ENCODE measurements at regions of chr18 and their contacts with region 1.

Region 1: DNA sequence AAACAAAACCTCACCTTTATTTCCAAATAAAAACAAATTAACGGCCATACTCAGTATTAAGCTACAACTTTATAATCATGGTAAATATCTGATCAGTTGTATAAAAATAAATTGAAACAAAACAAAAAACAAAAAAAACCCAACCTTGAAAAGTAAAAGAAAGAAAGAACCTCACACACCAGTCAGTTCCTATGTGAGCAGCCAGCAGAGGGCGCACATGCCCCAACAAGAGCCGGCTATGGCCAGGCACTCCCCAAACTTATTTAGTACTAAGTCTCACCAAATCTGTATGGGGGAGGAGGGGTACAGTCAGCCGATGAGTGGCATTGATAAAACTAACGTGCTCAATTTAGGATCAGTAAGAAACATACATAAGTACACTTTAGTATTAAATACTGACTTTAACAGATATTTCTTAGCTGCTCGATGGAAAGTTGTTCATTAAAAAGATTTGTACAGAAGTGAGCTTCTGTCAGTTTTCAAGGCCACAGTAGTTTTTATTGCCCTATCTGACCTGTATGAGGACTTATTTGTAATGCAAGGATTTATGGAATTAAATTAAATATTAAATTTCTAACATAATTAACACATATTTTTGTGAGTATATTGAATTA is 172.6 kb downstream of the TCF4 start:
- DNase-seq: peak; percentile 86
- ATAC-seq: peak; percentile 92
- H3K4me3 ChIP-seq: no peak overlapping the region
- H3K27ac ChIP-seq: no peak overlapping the region
- H3K4me1 ChIP-seq: peaks cover 9% of the 10 kb centered on the region
- H3K27me3 ChIP-seq: no peaks in the 10 kb centered on the region
- CTCF ChIP-seq: peak; percentile 90
- POLR2A ChIP-seq: no peak
- RAD21 ChIP-seq: peak; percentile 94

Region 2: GRCh38 chr18:55477499-55477859 is 62.1 kb after region 1 on chr18:
- CTCF ChIA-PET with region 1: no interaction called
- POLR2A ChIA-PET with region 1: no interaction called
- dilution Hi-C with region 1: no loop called
- in situ Hi-C with region 1: no loop called
- intact Hi-C with region 1: no loop called
- DNase-seq: peak; percentile 52
- ATAC-seq: peak; percentile 72
- H3K4me3 ChIP-seq: peak overlapping the region; percentile 41
- H3K27ac ChIP-seq: peak overlapping the region; percentile 86
- H3K4me1 ChIP-seq: peaks cover 3% of the 10 kb centered on the region; the same call in 1 of the 2 replicates
- H3K27me3 ChIP-seq: no peaks in the 10 kb centered on the region
- CTCF ChIP-seq: no peak
- POLR2A ChIP-seq: no peak
- RAD21 ChIP-seq: no peak; the same call in 1 of the 2 replicates

Region 3: DNA sequence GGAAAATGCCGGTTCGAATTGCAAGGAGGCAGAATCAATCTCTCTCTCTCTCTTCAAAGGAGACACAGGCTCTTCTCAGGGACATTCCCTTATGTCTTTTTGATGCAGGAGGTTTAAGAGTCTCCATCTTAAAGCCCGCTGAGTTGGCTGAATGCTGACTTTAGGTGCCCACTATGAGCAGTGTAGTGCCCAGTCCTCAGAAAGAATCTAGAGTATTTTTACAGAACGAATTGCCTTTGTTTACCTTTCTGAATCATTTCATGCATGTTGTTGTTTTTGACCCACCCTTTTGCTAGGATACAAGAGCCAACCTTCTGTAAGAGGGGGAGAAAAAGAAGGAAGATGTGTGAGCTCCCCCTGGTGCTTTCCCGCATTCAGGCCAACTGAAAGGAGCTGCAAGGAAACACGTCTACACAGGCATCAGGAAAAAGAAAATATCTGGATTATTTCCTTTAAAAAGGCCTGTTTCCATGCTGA is 366.2 kb after region 1 on chr18:
- CTCF ChIA-PET with region 1: no interaction called
- POLR2A ChIA-PET with region 1: no interaction called
- dilution Hi-C with region 1: no loop called
- in situ Hi-C with region 1: loop called (anchors 10 kb)
- intact Hi-C with region 1: loop called (anchors 1 kb)
- DNase-seq: peak; percentile 77
- ATAC-seq: peak; percentile 63
- H3K4me3 ChIP-seq: no peak overlapping the region
- H3K27ac ChIP-seq: no peak overlapping the region
- H3K4me1 ChIP-seq: no peaks in the 10 kb centered on the region; the same call in 1 of the 2 replicates
- H3K27me3 ChIP-seq: no peaks in the 10 kb centered on the region
- CTCF ChIP-seq: peak; percentile 80
- POLR2A ChIP-seq: no peak
- RAD21 ChIP-seq: peak; percentile 87

Region 4: GRCh38 chr18:55861266-55861665 is 445.9 kb after region 1 on chr18:
- CTCF ChIA-PET with region 1: no interaction called
- POLR2A ChIA-PET with region 1: no interaction called
- dilution Hi-C with region 1: no loop called
- in situ Hi-C with region 1: no loop called
- intact Hi-C with region 1: loop called (anchors 2 kb)
- DNase-seq: peak; percentile 60
- ATAC-seq: peak; percentile 59; the same call in 1 of the 2 replicates
- H3K4me3 ChIP-seq: no peak overlapping the region
- H3K27ac ChIP-seq: no peak overlapping the region
- H3K4me1 ChIP-seq: no peaks in the 10 kb centered on the region
- H3K27me3 ChIP-seq: no peaks in the 10 kb centered on the region
- CTCF ChIP-seq: peak; percentile 54
- POLR2A ChIP-seq: no peak
- RAD21 ChIP-seq: peak; percentile 58

Region 5: GRCh38 chr18:56314396-56314795 is 899.0 kb after region 1 on chr18:
- CTCF ChIA-PET with region 1: no interaction called
- POLR2A ChIA-PET with region 1: no interaction called
- dilution Hi-C with region 1: no loop called
- in situ Hi-C with region 1: no loop called
- intact Hi-C with region 1: loop called (anchors 10 kb)
- DNase-seq: peak; percentile 18
- ATAC-seq: no peak
- H3K4me3 ChIP-seq: no peak overlapping the region
- H3K27ac ChIP-seq: no peak overlapping the region
- H3K4me1 ChIP-seq: peaks cover 5% of the 10 kb centered on the region
- H3K27me3 ChIP-seq: no peaks in the 10 kb centered on the region
- CTCF ChIP-seq: peak; percentile 45
- POLR2A ChIP-seq: no peak
- RAD21 ChIP-seq: peak; percentile 35